ENCODE measurements at regions of chrX and their contacts with region 1.

Region 1: GRCh38 chrX:153494541-153495361 is at the start of gene BGN:
- DNase-seq: peak; percentile 54
- ATAC-seq: peak; percentile 65
- H3K4me3 Mint-ChIP-seq: peak within 1 kb of the TSS; percentile 47
- H3K27ac Mint-ChIP-seq: no peak within 1 kb of the TSS
- H3K4me1 Mint-ChIP-seq: peaks cover 8% of the 10 kb centered on the region; the same call in 1 of the 2 replicates
- H3K27me3 Mint-ChIP-seq: no peaks in the 10 kb centered on the region
- CTCF ChIP-seq: no peak
- total RNA-seq, gene BGN: 1.8 to 3.7 TPM (median 3.2 TPM) in 3 replicates

Region 2: DNA sequence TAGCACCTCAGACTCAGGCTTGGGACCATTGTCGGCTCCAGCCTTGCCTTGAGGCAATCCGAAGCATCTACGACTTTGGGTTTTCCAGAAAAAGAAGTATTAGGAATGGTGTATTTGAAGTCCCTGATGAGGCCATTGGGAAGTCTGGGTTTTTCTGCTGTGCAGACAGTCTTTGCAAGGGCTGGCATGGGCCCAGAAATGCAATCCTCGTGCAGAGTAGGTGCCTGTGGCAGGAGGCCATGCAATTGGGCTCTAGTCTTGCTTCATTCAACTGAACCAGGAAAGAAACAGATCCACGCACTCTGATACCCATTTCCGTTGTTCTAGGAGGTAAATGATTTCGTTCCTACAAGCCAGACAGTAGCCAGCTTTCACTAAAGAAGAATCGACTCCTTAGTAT is 71.1 kb before region 1 on chrX:
- CTCF ChIA-PET with region 1: no interaction called
- POLR2A ChIA-PET with region 1: no interaction called
- DNase-seq: no peak
- ATAC-seq: no peak
- H3K4me3 Mint-ChIP-seq: no peak overlapping the region
- H3K27ac Mint-ChIP-seq: no peak overlapping the region
- H3K4me1 Mint-ChIP-seq: no peaks in the 10 kb centered on the region
- H3K27me3 Mint-ChIP-seq: no peaks in the 10 kb centered on the region; the same call in 1 of the 2 replicates
- CTCF ChIP-seq: no peak

Region 3: DNA sequence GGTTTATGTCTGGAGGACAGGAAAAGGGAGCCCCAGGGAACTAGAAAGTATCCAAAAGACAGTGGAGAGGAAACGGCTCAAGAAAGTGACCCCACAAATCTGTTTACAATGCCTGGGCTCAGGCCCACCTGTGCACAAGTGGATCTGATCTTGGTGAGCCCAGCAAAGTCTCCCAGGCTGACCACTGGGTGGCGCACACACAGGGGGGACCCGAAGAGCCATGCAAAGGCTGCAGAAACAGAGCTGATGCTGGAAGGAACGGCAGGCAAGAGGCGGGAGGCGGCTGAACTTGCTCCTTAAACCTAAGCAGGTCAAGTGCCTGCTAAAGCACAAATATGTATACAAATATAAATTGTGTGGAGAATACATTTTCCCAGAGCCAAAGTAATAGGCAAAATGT is 33.9 kb before region 1 on chrX:
- CTCF ChIA-PET with region 1: interaction called, 10 read pairs
- POLR2A ChIA-PET with region 1: no interaction called
- DNase-seq: peak; percentile 73
- ATAC-seq: peak; percentile 81
- H3K4me3 Mint-ChIP-seq: no peak overlapping the region
- H3K27ac Mint-ChIP-seq: no peak overlapping the region
- H3K4me1 Mint-ChIP-seq: no peaks in the 10 kb centered on the region
- H3K27me3 Mint-ChIP-seq: no peaks in the 10 kb centered on the region
- CTCF ChIP-seq: 0 out of 2 replicates have a peak, but pooled peaks have one; percentile 21

Region 4: GRCh38 chrX:153470435-153471363 is 24.1 kb before region 1 on chrX and contains the start of gene HAUS7:
- CTCF ChIA-PET with region 1: interaction called, 26 read pairs
- POLR2A ChIA-PET with region 1: no interaction called
- DNase-seq: peak; percentile 85
- ATAC-seq: peak; percentile 88
- H3K4me3 Mint-ChIP-seq: peak within 1 kb of the TSS; percentile 76
- H3K27ac Mint-ChIP-seq: no peak within 1 kb of the TSS
- H3K4me1 Mint-ChIP-seq: no peaks in the 10 kb centered on the region
- H3K27me3 Mint-ChIP-seq: peaks cover 21% of the 10 kb centered on the region
- CTCF ChIP-seq: peak; percentile 32; the same call in 1 of the 2 replicates
- total RNA-seq, gene HAUS7: 46.5 to 52.9 TPM (median 52.2 TPM) in 3 replicates

Measured in WTC11 (cell line).